HEK293 (cell line): ENCODE measurements at regions of chr7 and their contacts with region 1.

Region 1: GRCh38 chr7:100586266-100587025 is at the start of gene FBXO24:
- H3K4me3 ChIP-seq: peak within 1 kb of the TSS; percentile 90
- H3K27ac ChIP-seq: peak within 1 kb of the TSS; percentile 73
- H3K4me1 ChIP-seq: peaks cover 12% of the 10 kb centered on the region
- CTCF ChIP-seq: no peak

Region 2: DNA sequence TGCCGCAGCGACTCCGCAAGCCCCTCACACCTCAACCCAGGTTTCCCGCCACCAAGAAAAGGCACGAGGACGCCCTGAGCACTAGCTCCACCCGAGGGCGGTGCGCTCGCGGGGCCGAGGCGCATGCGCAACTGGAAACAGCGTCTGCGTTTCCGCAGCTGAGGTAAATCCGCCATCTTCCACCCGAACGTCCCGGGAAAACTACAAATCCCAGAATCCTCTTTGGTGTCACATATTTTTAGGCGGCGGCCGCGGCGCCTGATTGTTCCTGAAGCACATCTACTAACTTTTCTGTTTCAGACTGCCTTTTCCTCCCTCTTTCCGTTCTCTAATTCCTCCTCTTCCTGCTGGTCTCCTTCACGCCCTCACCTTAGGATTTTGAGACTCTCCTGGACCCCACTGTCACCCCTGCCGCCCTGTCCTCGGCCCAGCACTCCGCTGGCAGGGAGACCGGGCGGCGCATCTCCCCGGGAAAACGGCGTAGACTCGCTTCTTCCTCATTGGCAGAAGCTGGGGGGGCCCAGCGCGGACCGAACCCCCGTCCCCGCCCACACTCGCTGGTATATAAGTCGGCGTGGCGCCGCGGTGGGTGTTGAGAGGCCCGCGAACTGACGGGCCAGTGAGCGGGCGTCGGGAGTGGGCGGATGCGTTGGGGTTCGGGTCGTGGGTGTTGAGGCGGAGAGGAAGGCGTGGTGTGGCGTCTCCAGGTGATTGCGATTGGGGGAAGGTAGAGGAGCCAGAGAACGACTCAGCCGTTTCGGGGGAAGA is 158.1 kb before region 1 on chr7 and contains the start of gene ZCWPW1:
- CTCF ChIA-PET with region 1: no interaction called
- POLR2A ChIA-PET with region 1: interaction called, 39 read pairs
- H3K4me3 ChIP-seq: peak within 1 kb of the TSS; percentile 83
- H3K27ac ChIP-seq: peak within 1 kb of the TSS; percentile 97
- H3K4me1 ChIP-seq: peaks cover 4% of the 10 kb centered on the region
- CTCF ChIP-seq: peak; percentile 28; the same call in 1 of the 2 replicates

Region 3: DNA sequence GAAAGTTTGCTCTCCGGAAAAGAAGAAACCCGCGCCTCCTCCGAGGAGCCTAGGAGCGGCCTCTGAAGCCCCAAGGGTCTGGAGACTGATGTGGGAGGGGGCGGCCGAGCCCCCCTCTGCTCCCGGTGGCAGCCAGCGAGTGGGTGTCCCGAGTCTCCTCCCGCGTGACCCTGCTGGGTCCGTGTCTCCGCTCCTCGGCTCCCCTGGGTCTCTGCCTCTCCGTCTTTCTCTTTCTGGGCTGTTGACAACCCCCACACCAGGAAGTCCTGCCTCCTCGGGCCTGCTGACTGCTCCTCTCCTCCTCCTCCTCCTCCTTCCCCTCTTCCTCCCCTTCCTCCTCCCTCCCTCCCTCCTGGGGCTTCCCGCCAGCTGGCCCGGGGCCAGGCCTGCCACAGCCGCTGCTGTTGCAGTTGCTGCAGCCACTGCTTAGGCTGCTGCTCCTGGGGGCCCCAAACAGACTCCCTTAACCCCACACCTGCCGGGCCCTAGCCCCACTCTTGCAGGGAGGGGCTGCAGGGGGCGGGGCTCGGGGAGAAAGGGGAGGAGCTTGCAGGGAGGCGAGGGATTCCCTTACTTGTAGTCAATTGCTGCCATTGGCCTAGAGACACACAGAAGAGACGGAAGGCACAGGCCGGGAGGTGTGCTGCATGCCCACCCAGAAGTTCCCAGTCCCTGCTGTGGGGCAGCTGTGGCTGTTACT is 107.3 kb before region 1 on chr7 and contains the start of gene TSC22D4:
- CTCF ChIA-PET with region 1: interaction called, 7 read pairs
- POLR2A ChIA-PET with region 1: interaction called, 32 read pairs
- H3K4me3 ChIP-seq: peak within 1 kb of the TSS; percentile 84
- H3K27ac ChIP-seq: peak within 1 kb of the TSS; percentile 80
- H3K4me1 ChIP-seq: peaks cover 7% of the 10 kb centered on the region
- CTCF ChIP-seq: no peak

Region 4: GRCh38 chr7:100563809-100564400 is 22.5 kb before region 1 on chr7:
- CTCF ChIA-PET with region 1: interaction called, 15 read pairs
- POLR2A ChIA-PET with region 1: interaction called, 26 read pairs
- H3K4me3 ChIP-seq: no peak overlapping the region
- H3K27ac ChIP-seq: no peak overlapping the region
- H3K4me1 ChIP-seq: no peaks in the 10 kb centered on the region
- CTCF ChIP-seq: peak; percentile 89

Region 5: GRCh38 chr7:100611974-100612729 is 25.7 kb after region 1 on chr7 and contains the start of gene MOSPD3:
- CTCF ChIA-PET with region 1: interaction called, 3 read pairs
- POLR2A ChIA-PET with region 1: interaction called, 91 read pairs
- H3K4me3 ChIP-seq: peak within 1 kb of the TSS; percentile 70
- H3K27ac ChIP-seq: peak within 1 kb of the TSS; percentile 54; the same call in 1 of the 2 replicates
- H3K4me1 ChIP-seq: no peaks in the 10 kb centered on the region
- CTCF ChIP-seq: no peak

Region 6: DNA sequence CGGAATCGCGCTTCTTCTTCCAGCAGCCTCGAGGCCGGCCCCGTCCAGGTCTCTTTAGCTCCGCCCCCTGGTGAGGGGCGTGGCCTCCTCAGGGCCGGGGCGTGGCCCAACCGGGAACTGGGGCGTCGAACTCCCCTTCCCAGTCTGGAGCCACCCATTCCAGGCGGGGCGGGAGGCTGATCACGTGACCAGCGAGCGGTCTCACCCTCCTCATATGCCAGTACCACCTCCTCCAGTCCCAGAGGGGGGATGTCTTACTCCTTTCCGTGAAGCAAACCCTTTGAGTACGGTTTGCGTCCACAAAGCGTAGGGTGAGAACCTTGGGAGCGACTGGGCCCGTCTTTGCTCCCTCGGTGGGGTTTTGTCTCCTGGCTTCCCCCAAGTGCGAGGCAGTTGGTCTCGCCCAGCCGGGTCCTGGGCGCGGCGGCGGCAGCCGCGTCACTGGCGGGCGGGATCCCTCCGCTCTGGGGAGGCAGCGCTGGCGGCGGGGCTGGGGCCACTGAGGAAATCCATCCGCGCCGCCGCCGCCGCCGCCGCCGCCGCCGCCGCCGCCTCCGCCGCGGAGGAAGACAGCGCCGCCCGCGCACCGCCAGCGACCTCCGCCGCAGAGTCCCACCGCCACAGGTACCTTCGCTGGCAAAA is 87.0 kb after region 1 on chr7 and contains the start of gene GNB2:
- CTCF ChIA-PET with region 1: interaction called, 3 read pairs
- POLR2A ChIA-PET with region 1: interaction called, 26 read pairs
- H3K4me3 ChIP-seq: peak within 1 kb of the TSS; percentile 97
- H3K27ac ChIP-seq: peak within 1 kb of the TSS; percentile 84
- H3K4me1 ChIP-seq: no peaks in the 10 kb centered on the region
- CTCF ChIP-seq: no peak

Region 7: DNA sequence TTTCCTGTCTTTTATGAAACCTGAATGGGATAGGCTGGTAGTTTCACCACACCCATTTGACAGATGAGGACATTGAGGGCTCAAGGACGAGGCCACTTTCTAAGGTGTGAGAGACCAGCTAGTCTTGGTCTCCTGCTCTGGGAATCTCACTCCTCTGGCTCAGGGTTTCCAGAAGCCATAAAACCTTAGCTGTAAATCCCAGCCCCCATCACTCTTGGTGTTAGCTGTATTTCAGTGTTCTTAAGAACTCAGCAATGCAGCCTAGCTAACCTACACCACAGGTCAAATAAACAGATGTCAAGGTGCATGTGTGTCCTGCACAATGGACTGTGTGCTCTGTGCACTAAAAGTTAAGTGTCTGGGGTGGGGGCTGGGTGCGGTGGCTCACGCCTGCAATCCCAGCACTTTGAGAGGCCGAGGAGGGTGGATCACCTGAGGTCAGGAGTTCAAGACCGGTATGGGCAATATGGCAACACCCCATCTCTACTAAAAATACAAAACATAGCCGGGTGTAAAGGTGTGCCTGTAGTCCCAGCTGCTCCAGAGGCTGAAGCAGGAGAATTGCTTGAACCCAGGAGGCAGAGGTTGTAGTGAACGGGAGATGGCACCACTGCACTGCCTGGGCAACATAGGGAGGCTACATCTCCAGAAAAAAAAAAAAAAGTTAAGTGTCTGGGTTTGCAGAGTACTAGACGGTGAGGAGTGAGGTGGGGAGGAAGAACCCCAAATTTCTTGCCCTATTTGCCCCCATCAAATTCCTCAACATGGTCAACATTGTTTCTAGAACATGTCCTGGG is 133.3 kb after region 1 on chr7:
- CTCF ChIA-PET with region 1: interaction called, 10 read pairs
- POLR2A ChIA-PET with region 1: interaction called, 4 read pairs
- H3K4me3 ChIP-seq: no peak overlapping the region
- H3K27ac ChIP-seq: no peak overlapping the region
- H3K4me1 ChIP-seq: no peaks in the 10 kb centered on the region
- CTCF ChIP-seq: no peak